ENCODE measurements at regions of chr14 and their contacts with region 1.

Region 1: DNA sequence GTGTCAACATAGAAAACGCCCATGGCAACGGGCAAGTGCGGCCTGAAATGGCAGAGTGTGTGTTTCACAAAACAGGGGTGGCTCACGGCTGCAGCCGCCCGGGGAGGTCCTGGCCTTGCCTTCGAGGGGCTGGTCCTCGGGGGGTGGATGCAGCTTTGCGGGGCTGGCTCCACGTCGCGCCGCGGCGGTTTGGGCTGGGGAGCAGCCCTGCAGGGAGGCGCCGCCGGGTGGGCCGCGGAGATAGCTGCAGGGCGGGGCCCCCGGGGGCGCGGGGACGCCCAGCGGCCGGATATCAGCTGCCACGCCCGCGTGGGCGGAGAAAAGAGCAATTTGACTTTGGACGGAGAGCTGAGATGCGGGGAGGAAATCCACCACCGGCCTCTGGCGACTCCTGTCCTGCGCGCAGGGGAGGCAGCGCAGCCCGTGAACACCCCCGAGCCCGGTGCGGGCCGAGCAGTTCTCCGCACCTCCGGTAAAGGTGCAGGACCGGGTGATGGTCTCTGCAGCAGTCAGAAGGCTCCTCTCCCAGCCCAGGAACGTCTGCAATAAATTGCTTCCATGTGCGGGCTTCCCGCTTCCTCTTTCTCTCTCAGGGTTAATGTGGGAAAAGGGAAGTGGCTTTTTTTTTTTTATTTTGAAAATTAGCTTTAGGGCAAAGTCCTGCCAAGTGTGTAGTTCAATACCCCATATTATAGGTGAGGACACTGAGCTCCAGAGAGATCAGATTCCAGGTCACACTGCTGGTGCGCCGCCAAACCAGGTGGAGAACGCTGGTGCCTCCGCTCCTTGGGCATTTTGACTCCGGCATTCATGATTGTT is 110.5 kb downstream of the ARF6 start:
- DNase-seq: peak; percentile 90
- ATAC-seq: peak; percentile 2
- H3K4me3 Mint-ChIP-seq: peak overlapping the region; percentile 75
- H3K27ac Mint-ChIP-seq: peak overlapping the region; percentile 98
- H3K4me1 Mint-ChIP-seq: peaks cover 56% of the 10 kb centered on the region
- H3K27me3 Mint-ChIP-seq: no peaks in the 10 kb centered on the region

Region 2: GRCh38 chr14:49585803-49586672 is 417.4 kb before region 1 on chr14 and contains the start of gene RPS29:
- CTCF ChIA-PET with region 1: no interaction called
- POLR2A ChIA-PET with region 1: no interaction called
- intact Hi-C with region 1: no loop called
- DNase-seq: peak; percentile 99
- ATAC-seq: peak; percentile 84
- H3K4me3 Mint-ChIP-seq: peak within 1 kb of the TSS; percentile 92
- H3K27ac Mint-ChIP-seq: peak within 1 kb of the TSS; percentile 96
- H3K4me1 Mint-ChIP-seq: peaks cover 40% of the 10 kb centered on the region
- H3K27me3 Mint-ChIP-seq: no peaks in the 10 kb centered on the region
- total RNA-seq, gene RPS29: 481 to 1,987 TPM

Region 3: DNA sequence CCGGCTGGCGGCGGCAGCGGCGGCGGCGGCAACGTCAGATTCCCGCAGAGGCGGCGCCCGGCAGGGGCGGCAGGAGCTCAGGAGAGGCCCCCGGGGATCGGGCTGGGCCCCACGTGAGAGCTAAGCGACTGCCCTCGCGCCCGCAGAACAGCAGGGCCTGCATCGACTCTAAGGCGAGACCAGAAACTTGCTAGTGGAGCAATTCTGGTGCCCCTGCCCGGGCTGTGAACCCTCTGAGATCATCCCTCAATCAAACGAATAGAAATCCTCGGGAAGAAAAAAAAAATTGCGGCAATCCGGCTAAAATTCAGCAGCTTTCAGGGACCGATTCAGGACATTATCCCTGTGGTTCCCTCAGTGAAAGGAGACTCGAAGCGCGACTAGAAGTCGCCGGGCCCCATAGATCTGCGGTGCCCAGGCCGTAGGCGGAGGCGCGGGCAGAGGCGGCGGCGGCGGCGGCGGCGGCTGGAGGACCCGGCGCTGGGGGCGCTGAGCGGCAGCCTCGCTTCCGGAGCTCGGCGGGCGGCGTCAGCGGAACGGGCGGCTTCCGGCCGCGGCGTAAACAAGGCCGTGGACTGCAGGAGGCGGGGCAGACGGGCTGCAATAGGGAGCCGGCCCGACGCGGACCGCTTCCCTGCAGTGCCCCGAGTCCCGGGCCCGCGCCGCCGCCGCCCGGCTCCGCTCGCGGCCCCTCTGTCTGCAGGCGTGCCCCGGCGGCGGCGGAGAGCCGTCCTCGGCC is 235.7 kb before region 1 on chr14 and contains the start of gene KLHDC2:
- CTCF ChIA-PET with region 1: interaction called, 3 read pairs
- POLR2A ChIA-PET with region 1: no interaction called
- intact Hi-C with region 1: loop called in 1 of 2 experiments (anchors 1 kb)
- DNase-seq: peak; percentile 94
- ATAC-seq: peak; percentile 79
- H3K4me3 Mint-ChIP-seq: peak within 1 kb of the TSS; percentile 96
- H3K27ac Mint-ChIP-seq: peak within 1 kb of the TSS; percentile 99
- H3K4me1 Mint-ChIP-seq: peaks cover 30% of the 10 kb centered on the region
- H3K27me3 Mint-ChIP-seq: no peaks in the 10 kb centered on the region
- total RNA-seq, gene KLHDC2: 16.0 to 22.4 TPM

Region 4: DNA sequence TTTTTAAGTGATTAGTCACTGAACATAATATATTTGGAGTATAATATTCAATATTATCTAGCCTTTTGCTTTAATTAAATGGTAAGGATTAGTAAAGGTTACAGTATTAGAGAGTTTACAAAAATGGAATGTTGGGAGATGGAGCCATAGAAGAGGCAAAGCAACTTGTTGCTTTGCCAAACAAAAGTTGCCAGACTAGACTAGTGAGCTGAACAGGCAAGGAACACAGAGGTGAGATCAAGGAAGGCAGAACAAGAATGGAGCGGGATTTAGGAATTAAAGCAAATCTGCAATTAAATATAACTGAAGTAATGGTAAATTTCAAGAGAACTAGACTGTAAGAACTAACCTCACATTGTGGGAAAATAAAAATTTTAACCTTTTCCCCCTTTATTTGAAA is 105.5 kb before region 1 on chr14:
- CTCF ChIA-PET with region 1: interaction called, 5 read pairs
- POLR2A ChIA-PET with region 1: interaction called, 50 read pairs
- intact Hi-C with region 1: loop called (anchors 1 kb)
- DNase-seq: no peak
- ATAC-seq: no peak
- H3K4me3 Mint-ChIP-seq: peak overlapping the region; percentile 91
- H3K27ac Mint-ChIP-seq: peak overlapping the region; percentile 98
- H3K4me1 Mint-ChIP-seq: peaks cover 32% of the 10 kb centered on the region
- H3K27me3 Mint-ChIP-seq: no peaks in the 10 kb centered on the region

Region 5: GRCh38 chr14:49984424-49984823 is 19.0 kb before region 1 on chr14:
- CTCF ChIA-PET with region 1: interaction called, 8 read pairs
- POLR2A ChIA-PET with region 1: interaction called, 4 read pairs
- intact Hi-C with region 1: loop called (anchors 1 kb)
- DNase-seq: peak; percentile 50
- ATAC-seq: peak; percentile 79
- H3K4me3 Mint-ChIP-seq: peak overlapping the region; percentile 16
- H3K27ac Mint-ChIP-seq: peak overlapping the region; percentile 85
- H3K4me1 Mint-ChIP-seq: peaks cover 70% of the 10 kb centered on the region
- H3K27me3 Mint-ChIP-seq: no peaks in the 10 kb centered on the region

Region 6: GRCh38 chr14:50038398-50039119 is 35.1 kb after region 1 on chr14:
- CTCF ChIA-PET with region 1: interaction called, 22 read pairs
- POLR2A ChIA-PET with region 1: interaction called, 113 read pairs
- intact Hi-C with region 1: loop called (anchors 1 kb)
- DNase-seq: peak; percentile 88
- ATAC-seq: peak; percentile 82
- H3K4me3 Mint-ChIP-seq: peak overlapping the region; percentile 75
- H3K27ac Mint-ChIP-seq: peak overlapping the region; percentile 99
- H3K4me1 Mint-ChIP-seq: peaks cover 66% of the 10 kb centered on the region
- H3K27me3 Mint-ChIP-seq: no peaks in the 10 kb centered on the region

Region 7: DNA sequence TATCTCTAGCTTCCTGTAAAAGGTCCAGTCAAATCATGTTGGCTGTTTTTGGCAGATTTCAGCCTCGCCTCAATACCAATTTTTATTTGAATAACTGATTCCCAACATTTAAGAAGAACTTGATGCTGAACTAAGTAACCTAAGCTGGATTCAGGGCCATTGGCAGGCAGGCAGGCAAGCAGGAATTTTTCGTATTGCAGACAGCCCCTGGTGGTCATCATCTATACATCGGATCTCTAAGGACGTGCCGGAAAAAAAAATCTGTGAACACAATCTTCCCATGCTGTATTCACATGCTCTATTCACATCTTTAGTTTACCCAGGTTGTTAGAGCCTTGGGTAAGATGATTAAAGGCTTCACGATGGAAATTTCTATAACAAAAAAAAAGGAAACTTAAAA is 105.9 kb after region 1 on chr14:
- CTCF ChIA-PET with region 1: interaction called, 12 read pairs
- POLR2A ChIA-PET with region 1: no interaction called
- intact Hi-C with region 1: loop called (anchors 1 kb)
- DNase-seq: no peak
- ATAC-seq: no peak
- H3K4me3 Mint-ChIP-seq: no peak overlapping the region
- H3K27ac Mint-ChIP-seq: no peak overlapping the region
- H3K4me1 Mint-ChIP-seq: peaks cover 32% of the 10 kb centered on the region
- H3K27me3 Mint-ChIP-seq: no peaks in the 10 kb centered on the region

Measured in activated CD4-positive, alpha-beta T cell treated with anti-CD3 and anti-CD28 coated beads for 36 hours (primary cell).